ENCODE measurements at regions of chr20 and their contacts with region 1.

Region 1: GRCh38 chr20:62143118-62143973 is at the starts of genes PSMA7 and SS18L1:
- DNase-seq: peak; percentile 92
- ATAC-seq: peak; percentile 87
- H3K4me3 Mint-ChIP-seq: peak within 1 kb of the TSS; percentile 89
- H3K27ac Mint-ChIP-seq: peak within 1 kb of the TSS; percentile 91
- H3K4me1 Mint-ChIP-seq: peaks cover 61% of the 10 kb centered on the region
- H3K27me3 Mint-ChIP-seq: no peaks in the 10 kb centered on the region
- total RNA-seq, gene PSMA7: 208 to 296 TPM
- total RNA-seq, gene SS18L1: 14.3 to 16.6 TPM

Region 2: DNA sequence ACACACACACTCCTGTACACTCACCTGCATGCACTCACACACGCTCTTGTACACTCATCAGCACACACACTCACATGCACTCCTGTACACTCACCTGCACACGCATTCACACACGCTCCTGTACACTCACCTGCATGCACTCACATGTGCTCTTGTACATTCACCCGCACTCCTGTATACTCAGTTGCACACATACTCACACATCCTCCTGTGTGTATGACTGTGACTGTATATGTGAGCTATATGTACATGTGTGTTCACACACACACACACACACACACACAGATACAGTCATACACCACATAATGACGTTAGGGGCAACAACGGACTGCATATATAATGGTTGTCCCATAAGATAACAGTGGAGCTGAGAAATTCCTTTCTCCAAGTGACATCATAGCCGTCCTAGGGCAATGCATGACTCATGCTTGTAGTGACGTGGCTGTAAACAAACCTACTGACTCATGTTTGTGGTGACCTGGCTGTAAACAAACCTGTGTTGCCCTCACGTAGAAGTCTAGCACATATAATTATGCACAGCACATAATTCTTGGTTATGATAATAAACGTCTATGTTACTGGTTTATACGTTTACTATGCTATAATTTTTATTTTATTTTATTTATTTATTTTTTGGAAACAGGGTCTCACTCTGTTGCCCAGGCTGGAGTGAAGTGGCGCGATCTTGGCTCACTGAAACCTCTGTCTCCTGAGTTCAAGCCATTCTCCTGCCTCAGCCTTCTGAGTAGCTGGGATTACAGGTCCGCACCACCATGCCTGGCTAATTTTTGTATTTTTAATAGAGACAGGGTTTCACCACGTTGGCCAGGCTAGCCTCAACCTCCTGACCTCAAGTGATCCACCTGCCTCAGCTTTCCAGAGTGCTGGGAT is 54.9 kb before region 1 on chr20:
- CTCF ChIA-PET with region 1: no interaction called
- POLR2A ChIA-PET with region 1: no interaction called
- intact Hi-C with region 1: no loop called
- DNase-seq: no peak
- ATAC-seq: peak; percentile 36
- H3K4me3 Mint-ChIP-seq: no peak overlapping the region
- H3K27ac Mint-ChIP-seq: no peak overlapping the region
- H3K4me1 Mint-ChIP-seq: no peaks in the 10 kb centered on the region
- H3K27me3 Mint-ChIP-seq: peaks cover 7% of the 10 kb centered on the region

Region 3: DNA sequence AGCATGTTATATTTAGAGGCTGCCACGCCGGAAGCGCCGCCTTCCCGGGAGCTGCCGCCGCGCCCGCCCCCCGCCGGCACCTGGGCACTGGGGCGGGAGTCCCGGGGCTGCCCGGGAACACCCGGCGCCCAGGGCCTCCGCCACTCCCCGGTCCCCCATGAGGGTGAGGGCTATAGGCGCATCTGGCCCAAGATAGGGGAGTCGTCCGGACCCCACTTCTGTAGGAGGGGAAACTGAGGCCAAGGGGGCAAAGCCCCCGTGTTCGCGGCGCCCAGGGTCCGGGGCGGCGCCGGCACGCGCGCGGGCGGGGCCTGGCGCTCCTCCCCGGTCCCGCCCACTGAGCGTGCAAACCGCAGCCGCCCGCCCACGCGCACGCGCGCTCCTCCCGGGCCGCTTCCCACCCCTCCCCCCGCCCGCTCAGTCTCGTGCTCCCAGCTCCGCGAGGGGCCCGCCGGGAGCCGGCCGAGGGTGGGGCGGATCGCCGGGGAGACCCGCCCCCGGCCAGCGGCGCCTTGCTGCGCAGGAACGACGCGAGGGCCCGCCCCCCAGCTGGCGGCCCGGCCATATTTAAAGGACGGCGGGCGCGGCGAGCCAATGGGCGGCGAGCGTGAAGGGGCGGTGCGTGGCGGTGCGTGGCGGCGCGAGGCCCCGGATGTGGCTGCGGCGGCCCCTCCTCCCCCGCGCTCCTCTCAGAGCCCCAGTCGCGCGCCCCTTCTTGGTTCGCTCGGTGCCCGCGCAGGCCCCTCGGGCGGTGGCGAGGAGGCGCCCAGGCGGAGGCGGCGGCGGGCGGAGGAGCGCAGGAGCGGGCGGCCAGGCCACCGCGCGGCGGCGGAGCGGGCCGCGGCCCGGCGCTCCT is 21.3 kb before region 1 on chr20 and contains the start of gene LSM14B:
- CTCF ChIA-PET with region 1: interaction called, 8 read pairs
- POLR2A ChIA-PET with region 1: interaction called, 3 read pairs
- intact Hi-C with region 1: loop called (anchors 1 kb)
- DNase-seq: peak; percentile 99
- ATAC-seq: peak; percentile 84
- H3K4me3 Mint-ChIP-seq: peak within 1 kb of the TSS; percentile 80
- H3K27ac Mint-ChIP-seq: peak within 1 kb of the TSS; percentile 91
- H3K4me1 Mint-ChIP-seq: peaks cover 54% of the 10 kb centered on the region
- H3K27me3 Mint-ChIP-seq: no peaks in the 10 kb centered on the region
- total RNA-seq, gene LSM14B: 38.7 TPM

Region 4: GRCh38 chr20:62182613-62183425 is 39.5 kb after region 1 on chr20 and contains the start of gene MTG2:
- CTCF ChIA-PET with region 1: no interaction called
- POLR2A ChIA-PET with region 1: no interaction called
- intact Hi-C with region 1: loop called (anchors 1 kb)
- DNase-seq: peak; percentile 97
- ATAC-seq: peak; percentile 99
- H3K4me3 Mint-ChIP-seq: peak within 1 kb of the TSS; percentile 88
- H3K27ac Mint-ChIP-seq: peak within 1 kb of the TSS; percentile 87
- H3K4me1 Mint-ChIP-seq: peaks cover 39% of the 10 kb centered on the region
- H3K27me3 Mint-ChIP-seq: no peaks in the 10 kb centered on the region
- total RNA-seq, gene MTG2: 38.0 to 44.9 TPM

Region 5: GRCh38 chr20:62208880-62209755 is 65.8 kb after region 1 on chr20:
- CTCF ChIA-PET with region 1: no interaction called
- POLR2A ChIA-PET with region 1: no interaction called
- intact Hi-C with region 1: no loop called
- DNase-seq: no peak
- ATAC-seq: no peak
- H3K4me3 Mint-ChIP-seq: no peak overlapping the region
- H3K27ac Mint-ChIP-seq: no peak overlapping the region
- H3K4me1 Mint-ChIP-seq: no peaks in the 10 kb centered on the region
- H3K27me3 Mint-ChIP-seq: peaks cover 2% of the 10 kb centered on the region

Region 6: DNA sequence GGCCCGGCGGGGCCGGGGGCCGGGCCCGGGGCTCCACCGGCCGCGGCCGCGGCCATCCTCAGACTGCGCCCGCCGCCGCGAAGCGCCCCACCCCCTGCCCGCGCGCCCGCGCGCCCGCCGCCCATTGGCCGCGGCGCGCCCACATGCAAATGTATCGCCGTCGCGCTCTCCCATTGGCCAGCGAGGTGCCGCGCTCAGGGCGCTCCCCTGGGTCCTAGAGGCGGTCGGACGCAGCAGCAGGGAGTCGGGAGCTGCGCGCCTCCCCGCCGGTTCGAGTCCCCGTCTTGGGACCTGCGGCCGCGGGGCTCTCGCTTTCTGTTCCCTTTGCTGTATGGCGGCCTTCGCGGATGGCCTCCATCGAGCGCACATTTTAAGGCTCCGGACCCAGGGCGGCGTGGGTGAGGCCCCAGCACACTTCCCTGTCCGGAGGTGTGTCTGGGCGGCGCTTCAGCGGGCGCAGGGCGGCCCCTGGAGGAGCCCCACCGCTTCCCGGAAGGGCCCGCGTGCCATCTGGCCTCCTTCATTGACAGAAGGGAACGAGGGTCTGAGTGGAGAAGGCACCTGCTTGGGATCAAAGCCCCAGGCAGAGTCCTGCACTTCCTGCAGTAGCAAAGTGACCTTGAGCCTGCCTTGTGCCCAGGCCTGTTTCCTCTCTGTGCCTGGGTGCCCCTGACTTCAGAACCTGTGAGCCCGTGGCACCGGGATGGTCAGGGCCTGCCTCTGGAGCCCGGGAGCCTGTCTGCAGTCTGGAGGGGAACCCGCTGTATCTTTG is 264.1 kb after region 1 on chr20 and contains the start of gene CABLES2:
- CTCF ChIA-PET with region 1: no interaction called
- POLR2A ChIA-PET with region 1: no interaction called
- intact Hi-C with region 1: loop called in 1 of 2 experiments (anchors 2 kb)
- DNase-seq: peak; percentile 96
- ATAC-seq: peak; percentile 93
- H3K4me3 Mint-ChIP-seq: peak within 1 kb of the TSS; percentile 72
- H3K27ac Mint-ChIP-seq: peak within 1 kb of the TSS; percentile 82
- H3K4me1 Mint-ChIP-seq: peaks cover 23% of the 10 kb centered on the region
- H3K27me3 Mint-ChIP-seq: peaks cover 2% of the 10 kb centered on the region
- total RNA-seq, gene CABLES2: 6.4 to 7.6 TPM